ENCODE measurements at regions of chr5 and their contacts with region 1.

Region 1: GRCh38 chr5:140336388-140336787 is 10.0 kb downstream of the HBEGF start:
- DNase-seq: peak in 1 of 2 donors; percentile 78
- H3K4me3 ChIP-seq: no peak overlapping the region
- H3K27ac ChIP-seq: peak overlapping the region in 4 of 5 donors; percentile 33 to 90 (median 48)
- H3K4me1 ChIP-seq: peaks cover 58 to 95% (median 75%) of the 10 kb centered on the region in 4 donors
- H3K27me3 ChIP-seq: no peaks in the 10 kb centered on the region
- CTCF ChIP-seq: no peak
- EP300 ChIP-seq: no peak
- POLR2A ChIP-seq: no peak

Region 2: GRCh38 chr5:140251527-140251973 is 84.8 kb before region 1 on chr5:
- intact Hi-C with region 1: loop called (anchors 5 kb)
- DNase-seq: no peak
- H3K4me3 ChIP-seq: no peak overlapping the region
- H3K27ac ChIP-seq: peak overlapping the region; percentile 16 to 82 (median 50)
- H3K4me1 ChIP-seq: peaks cover 59 to 98% (median 78%) of the 10 kb centered on the region in 4 donors
- H3K27me3 ChIP-seq: no peaks in the 10 kb centered on the region
- CTCF ChIP-seq: no peak
- EP300 ChIP-seq: no peak
- POLR2A ChIP-seq: no peak